Naive thymus-derived CD4-positive, alpha-beta T cell (primary cell): ENCODE measurements at regions of chr2 and their contacts with region 1.

Region 1: GRCh38 chr2:38508311-38509039 is 94.3 kb downstream of the HNRNPLL start:
- DNase-seq: peak; percentile 49 to 76 (median 67)
- ATAC-seq: peak; percentile 84
- H3K4me3 ChIP-seq: no peak overlapping the region
- H3K4me3 Mint-ChIP-seq: no peak overlapping the region
- H3K27ac ChIP-seq: no peak overlapping the region
- H3K27ac Mint-ChIP-seq: peak overlapping the region in 2 of 9 donors; percentile 15 to 19
- H3K4me1 ChIP-seq: no peaks in the 10 kb centered on the region
- H3K4me1 Mint-ChIP-seq: peaks cover 0 to 19% (median 0%) of the 10 kb centered on the region in 7 donors
- H3K27me3 ChIP-seq: no peaks in the 10 kb centered on the region
- H3K27me3 Mint-ChIP-seq: peaks cover 0 to 14% (median 5%) of the 10 kb centered on the region in 5 donors

Region 2: GRCh38 chr2:37397166-37397565 is 1111.3 kb before region 1 on chr2:
- CTCF ChIA-PET with region 1: no interaction called
- POLR2A ChIA-PET with region 1: no interaction called
- intact Hi-C with region 1: loop called in 1 of 2 experiments (anchors 2 kb)
- DNase-seq: no peak
- ATAC-seq: no peak
- H3K4me3 ChIP-seq: no peak overlapping the region
- H3K4me3 Mint-ChIP-seq: no peak overlapping the region
- H3K27ac ChIP-seq: no peak overlapping the region
- H3K27ac Mint-ChIP-seq: no peak overlapping the region
- H3K4me1 ChIP-seq: no peaks in the 10 kb centered on the region
- H3K4me1 Mint-ChIP-seq: peaks cover 0 to 6% (median 3%) of the 10 kb centered on the region in 7 donors
- H3K27me3 ChIP-seq: no peaks in the 10 kb centered on the region
- H3K27me3 Mint-ChIP-seq: peaks cover 0 to 35% (median 0%) of the 10 kb centered on the region in 5 donors

Region 3: GRCh38 chr2:37890893-37891495 is 617.5 kb before region 1 on chr2:
- CTCF ChIA-PET with region 1: no interaction called
- POLR2A ChIA-PET with region 1: no interaction called
- intact Hi-C with region 1: loop called in 1 of 2 experiments (anchors 5 kb)
- DNase-seq: peak; percentile 17 to 63 (median 44)
- ATAC-seq: peak; percentile 72
- H3K4me3 ChIP-seq: no peak overlapping the region
- H3K4me3 Mint-ChIP-seq: peak overlapping the region in 6 of 10 donors; percentile 12 to 75 (median 55)
- H3K27ac ChIP-seq: no peak overlapping the region
- H3K27ac Mint-ChIP-seq: peak overlapping the region in 2 of 9 donors; percentile 35 to 71
- H3K4me1 ChIP-seq: peaks cover 25 to 33% of the 10 kb centered on the region in 2 donors
- H3K4me1 Mint-ChIP-seq: peaks cover 24 to 58% (median 45%) of the 10 kb centered on the region in 7 donors
- H3K27me3 ChIP-seq: no peaks in the 10 kb centered on the region
- H3K27me3 Mint-ChIP-seq: peaks cover 0 to 29% (median 2%) of the 10 kb centered on the region in 5 donors

Region 4: GRCh38 chr2:37982147-37982582 is 526.3 kb before region 1 on chr2:
- CTCF ChIA-PET with region 1: no interaction called
- POLR2A ChIA-PET with region 1: no interaction called
- intact Hi-C with region 1: loop called in 1 of 2 experiments (anchors 1 kb)
- DNase-seq: peak in 7 of 9 donors; percentile 33 to 61 (median 39)
- ATAC-seq: peak; percentile 52
- H3K4me3 ChIP-seq: no peak overlapping the region
- H3K4me3 Mint-ChIP-seq: peak overlapping the region in 1 of 10 donors; percentile 14
- H3K27ac ChIP-seq: no peak overlapping the region
- H3K27ac Mint-ChIP-seq: no peak overlapping the region
- H3K4me1 ChIP-seq: no peaks in the 10 kb centered on the region
- H3K4me1 Mint-ChIP-seq: peaks cover 0 to 8% (median 6%) of the 10 kb centered on the region in 7 donors
- H3K27me3 ChIP-seq: no peaks in the 10 kb centered on the region
- H3K27me3 Mint-ChIP-seq: peaks cover 0 to 14% (median 0%) of the 10 kb centered on the region in 5 donors

Region 5: GRCh38 chr2:38315707-38316333 is 192.7 kb before region 1 on chr2:
- CTCF ChIA-PET with region 1: interaction called, 69 read pairs
- POLR2A ChIA-PET with region 1: interaction called, 3 read pairs
- intact Hi-C with region 1: loop called (anchors 1 kb)
- DNase-seq: peak in 7 of 9 donors; percentile 14 to 50 (median 33)
- ATAC-seq: peak; percentile 66
- H3K4me3 ChIP-seq: no peak overlapping the region
- H3K4me3 Mint-ChIP-seq: no peak overlapping the region
- H3K27ac ChIP-seq: no peak overlapping the region
- H3K27ac Mint-ChIP-seq: no peak overlapping the region
- H3K4me1 ChIP-seq: no peaks in the 10 kb centered on the region
- H3K4me1 Mint-ChIP-seq: peaks cover 0 to 6% (median 0%) of the 10 kb centered on the region in 7 donors
- H3K27me3 ChIP-seq: no peaks in the 10 kb centered on the region
- H3K27me3 Mint-ChIP-seq: no peaks in the 10 kb centered on the region

Region 6: DNA sequence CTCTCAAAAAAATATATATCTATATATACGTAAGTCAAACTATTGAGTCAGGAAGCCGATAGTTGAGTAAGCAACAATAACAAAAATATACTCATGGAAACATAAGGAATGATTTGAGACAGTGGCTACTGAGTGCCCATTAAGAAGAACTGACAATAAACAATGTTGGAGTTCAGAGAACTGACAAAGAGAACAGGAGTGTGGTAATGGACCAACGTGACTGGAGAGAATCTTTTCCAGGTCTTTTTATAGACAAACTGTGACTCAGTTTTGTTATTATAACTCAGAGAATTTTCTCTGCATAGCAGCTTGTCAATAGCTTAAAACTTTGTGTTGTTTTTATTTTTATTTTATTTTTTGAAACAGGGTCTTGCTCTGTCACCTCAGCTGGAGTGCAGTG is 152.8 kb after region 1 on chr2:
- CTCF ChIA-PET with region 1: no interaction called
- POLR2A ChIA-PET with region 1: no interaction called
- intact Hi-C with region 1: no loop called
- DNase-seq: no peak
- ATAC-seq: no peak
- H3K4me3 ChIP-seq: no peak overlapping the region
- H3K4me3 Mint-ChIP-seq: no peak overlapping the region
- H3K27ac ChIP-seq: no peak overlapping the region
- H3K27ac Mint-ChIP-seq: peak overlapping the region in 1 of 9 donors; percentile 44
- H3K4me1 ChIP-seq: peaks cover 0 to 16% of the 10 kb centered on the region in 2 donors
- H3K4me1 Mint-ChIP-seq: peaks cover 5 to 53% (median 17%) of the 10 kb centered on the region in 7 donors
- H3K27me3 ChIP-seq: no peaks in the 10 kb centered on the region
- H3K27me3 Mint-ChIP-seq: no peaks in the 10 kb centered on the region